Heart left ventricle (tissue), 16 donors: ENCODE measurements at regions of chr12 and their contacts with region 1.

Region 1: GRCh38 chr12:1234073-1234472 is 243.1 kb downstream of the ERC1 start:
- DNase-seq: no peak
- ATAC-seq: no peak
- H3K4me3 ChIP-seq: no peak overlapping the region
- H3K27ac ChIP-seq: no peak overlapping the region
- H3K4me1 ChIP-seq: peaks cover 0 to 4% (median 0%) of the 10 kb centered on the region in 12 donors
- H3K27me3 ChIP-seq: no peaks in the 10 kb centered on the region
- CTCF ChIP-seq: no peak
- POLR2A ChIP-seq: no peak

Region 2: GRCh38 chr12:958588-959123 is 275.4 kb before region 1 on chr12:
- intact Hi-C with region 1: no loop called
- DNase-seq: peak in 3 of 5 donors; percentile 43 to 65 (median 47)
- ATAC-seq: peak; percentile 49 to 90 (median 69)
- H3K4me3 ChIP-seq: no peak overlapping the region
- H3K27ac ChIP-seq: peak overlapping the region in 8 of 12 donors; percentile 0 to 56 (median 24)
- H3K4me1 ChIP-seq: peaks cover 0 to 17% (median 0%) of the 10 kb centered on the region in 12 donors
- H3K27me3 ChIP-seq: no peaks in the 10 kb centered on the region
- CTCF ChIP-seq: no peak
- POLR2A ChIP-seq: no peak

Region 3: DNA sequence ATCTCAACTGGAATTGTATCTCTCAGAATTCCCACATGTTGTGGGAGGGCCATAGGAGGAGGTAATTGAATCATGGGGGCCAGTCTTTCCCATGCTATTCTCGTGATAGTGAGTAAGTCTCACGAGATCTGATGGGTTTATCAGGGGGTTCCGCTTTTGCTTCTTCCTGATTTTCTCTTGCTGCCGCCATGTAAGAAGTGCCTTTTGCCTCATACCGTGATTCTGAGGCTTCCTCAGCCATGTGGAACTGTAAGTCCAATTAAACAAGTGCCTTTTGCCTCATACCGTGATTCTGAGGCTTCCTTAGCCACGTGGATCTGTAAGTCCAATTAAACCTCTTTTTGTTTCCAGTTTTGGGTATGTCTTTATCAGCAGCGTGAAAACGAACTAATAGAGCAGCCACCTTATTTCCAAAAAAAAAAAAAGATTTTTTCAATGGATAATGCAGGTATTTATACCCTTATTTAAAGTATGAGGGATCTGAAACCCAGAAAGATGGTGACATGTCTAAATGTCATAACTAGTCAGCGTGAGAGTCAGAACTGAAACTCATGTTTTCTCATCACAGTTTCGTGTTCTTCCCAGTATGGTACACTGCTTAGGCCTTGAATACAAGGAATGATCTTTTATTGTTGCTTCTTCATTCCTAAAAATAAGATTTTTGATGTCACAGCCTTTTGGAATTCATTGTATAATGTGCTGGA is 153.4 kb before region 1 on chr12:
- intact Hi-C with region 1: no loop called
- DNase-seq: no peak
- ATAC-seq: no peak
- H3K4me3 ChIP-seq: no peak overlapping the region
- H3K27ac ChIP-seq: no peak overlapping the region
- H3K4me1 ChIP-seq: peaks cover 0 to 34% (median 17%) of the 10 kb centered on the region in 12 donors
- H3K27me3 ChIP-seq: no peaks in the 10 kb centered on the region
- CTCF ChIP-seq: no peak
- POLR2A ChIP-seq: no peak

Region 4: DNA sequence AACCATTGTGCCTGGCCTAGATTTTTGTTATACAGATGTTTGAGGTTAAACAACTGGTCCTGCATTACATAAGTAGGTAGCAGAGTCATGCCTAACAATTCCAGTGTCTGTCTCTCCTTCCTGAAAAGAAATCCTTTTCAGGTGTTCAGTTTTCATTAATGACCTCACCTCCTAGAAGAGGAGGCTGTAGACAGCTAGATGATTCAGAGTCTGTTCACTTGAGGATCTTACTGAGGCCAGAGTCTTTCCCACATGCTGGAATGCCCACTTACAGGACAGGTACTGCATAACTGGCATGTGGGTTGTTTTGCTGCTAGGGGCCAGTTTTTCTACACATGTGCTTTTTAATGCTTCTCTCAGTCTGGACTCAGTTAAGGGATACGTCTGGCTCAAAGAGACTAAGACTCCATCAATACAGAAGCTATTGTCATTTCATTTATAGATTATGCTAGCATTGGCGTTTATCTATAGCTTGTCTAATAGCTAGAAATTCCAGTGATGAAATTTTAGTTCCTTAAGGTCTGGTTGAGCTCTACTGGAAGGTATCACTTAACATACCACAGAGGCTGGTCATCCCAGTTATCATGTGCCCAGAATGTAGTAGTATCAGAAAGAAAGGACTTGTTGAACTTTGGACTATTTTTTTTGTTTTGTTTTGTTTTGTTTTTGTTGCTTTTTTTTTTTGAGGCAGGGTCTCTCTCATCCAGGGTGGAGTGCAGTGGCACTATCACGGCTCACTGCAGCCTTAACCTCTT is 36.6 kb before region 1 on chr12:
- intact Hi-C with region 1: loop called in 1 of 10 experiments (anchors 5 kb)
- DNase-seq: no peak
- ATAC-seq: no peak
- H3K4me3 ChIP-seq: no peak overlapping the region
- H3K27ac ChIP-seq: no peak overlapping the region
- H3K4me1 ChIP-seq: peaks cover 0 to 9% (median 0%) of the 10 kb centered on the region in 12 donors
- H3K27me3 ChIP-seq: no peaks in the 10 kb centered on the region
- CTCF ChIP-seq: no peak
- POLR2A ChIP-seq: no peak

Region 5: GRCh38 chr12:1300460-1300859 is 66.4 kb after region 1 on chr12:
- intact Hi-C with region 1: loop called in 1 of 10 experiments (anchors 2 kb)
- DNase-seq: no peak
- ATAC-seq: no peak
- H3K4me3 ChIP-seq: no peak overlapping the region
- H3K27ac ChIP-seq: no peak overlapping the region
- H3K4me1 ChIP-seq: peaks cover 0 to 12% (median 5%) of the 10 kb centered on the region in 12 donors
- H3K27me3 ChIP-seq: no peaks in the 10 kb centered on the region
- CTCF ChIP-seq: no peak
- POLR2A ChIP-seq: no peak